T-cell (primary cell): ENCODE measurements at regions of chr3 and their contacts with region 1.

Region 1: GRCh38 chr3:4978204-4978965 is 852 bp upstream of the BHLHE40 start:
- DNase-seq: peak; percentile 39 to 85 (median 64)
- ATAC-seq: peak; percentile 51 to 55 (median 52)
- H3K4me3 ChIP-seq: peak overlapping the region; percentile 73 to 90
- H3K4me3 Mint-ChIP-seq: peak overlapping the region; percentile 94 to 98 (median 95)
- H3K27ac ChIP-seq: peak overlapping the region; percentile 94
- H3K27ac Mint-ChIP-seq: peak overlapping the region; percentile 98
- H3K4me1 ChIP-seq: peaks cover 18 to 49% of the 10 kb centered on the region in 2 experiments
- H3K4me1 Mint-ChIP-seq: peaks cover 49 to 60% (median 59%) of the 10 kb centered on the region in 3 donors
- H3K27me3 ChIP-seq: no peaks in the 10 kb centered on the region
- H3K27me3 Mint-ChIP-seq: no peaks in the 10 kb centered on the region

Region 2: GRCh38 chr3:4750306-4750968 is 227.9 kb before region 1 on chr3:
- CTCF ChIA-PET with region 1: interaction called in 1 of 2 experiments, 5 read pairs
- POLR2A ChIA-PET with region 1: interaction called in 1 of 2 experiments, 15 read pairs
- DNase-seq: peak in 8 of 35 experiments; percentile 10 to 47 (median 18)
- ATAC-seq: peak in 2 of 4 experiments; percentile 55 to 86
- H3K4me3 ChIP-seq: no peak overlapping the region
- H3K4me3 Mint-ChIP-seq: peak overlapping the region in 1 of 3 donors; percentile 38
- H3K27ac ChIP-seq: peak overlapping the region; percentile 53
- H3K27ac Mint-ChIP-seq: peak overlapping the region; percentile 71 to 83
- H3K4me1 ChIP-seq: peaks cover 0 to 17% of the 10 kb centered on the region in 2 experiments
- H3K4me1 Mint-ChIP-seq: peaks cover 34 to 39% (median 38%) of the 10 kb centered on the region in 3 donors
- H3K27me3 ChIP-seq: no peaks in the 10 kb centered on the region
- H3K27me3 Mint-ChIP-seq: no peaks in the 10 kb centered on the region

Region 3: DNA sequence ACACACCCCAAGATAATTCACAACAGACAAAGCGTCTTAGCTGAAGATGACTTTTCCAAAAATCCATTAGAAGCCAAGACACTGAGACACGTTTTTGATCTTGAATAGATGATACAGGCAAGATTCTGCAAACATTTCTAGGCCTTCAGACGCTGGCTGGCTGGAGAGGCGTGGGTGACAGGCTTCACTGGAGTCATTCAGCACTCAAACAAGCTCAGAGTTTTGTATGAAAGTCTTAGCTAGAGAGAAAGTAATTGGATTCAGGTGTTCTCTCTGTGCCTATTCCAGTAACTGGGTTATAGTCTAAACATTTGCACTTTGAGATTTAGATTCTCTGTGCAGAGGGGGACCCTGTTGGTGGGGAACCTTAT is 146.8 kb before region 1 on chr3:
- CTCF ChIA-PET with region 1: interaction called, 3 to 4 read pairs
- POLR2A ChIA-PET with region 1: interaction called, 3 to 13 read pairs
- DNase-seq: peak in 13 of 35 experiments; percentile 14 to 43 (median 26)
- ATAC-seq: peak; percentile 22 to 35 (median 30)
- H3K4me3 ChIP-seq: peak overlapping the region; percentile 20 to 36
- H3K4me3 Mint-ChIP-seq: peak overlapping the region; percentile 72 to 83 (median 82)
- H3K27ac ChIP-seq: peak overlapping the region; percentile 73
- H3K27ac Mint-ChIP-seq: peak overlapping the region; percentile 94 to 99
- H3K4me1 ChIP-seq: peaks cover 68 to 86% of the 10 kb centered on the region in 2 experiments
- H3K4me1 Mint-ChIP-seq: peaks cover 93 to 94% (median 93%) of the 10 kb centered on the region in 3 donors
- H3K27me3 ChIP-seq: no peaks in the 10 kb centered on the region
- H3K27me3 Mint-ChIP-seq: no peaks in the 10 kb centered on the region

Region 4: GRCh38 chr3:4943553-4943952 is 34.8 kb before region 1 on chr3:
- CTCF ChIA-PET with region 1: no interaction called
- POLR2A ChIA-PET with region 1: no interaction called
- DNase-seq: peak in 1 of 35 experiments; percentile 17
- ATAC-seq: no peak
- H3K4me3 ChIP-seq: no peak overlapping the region
- H3K4me3 Mint-ChIP-seq: no peak overlapping the region
- H3K27ac ChIP-seq: no peak overlapping the region
- H3K27ac Mint-ChIP-seq: no peak overlapping the region
- H3K4me1 ChIP-seq: no peaks in the 10 kb centered on the region
- H3K4me1 Mint-ChIP-seq: no peaks in the 10 kb centered on the region
- H3K27me3 ChIP-seq: no peaks in the 10 kb centered on the region
- H3K27me3 Mint-ChIP-seq: no peaks in the 10 kb centered on the region

Region 5: GRCh38 chr3:5035692-5036391 is 57.5 kb after region 1 on chr3:
- CTCF ChIA-PET with region 1: interaction called in 1 of 2 experiments, 15 read pairs
- POLR2A ChIA-PET with region 1: no interaction called
- DNase-seq: no peak
- ATAC-seq: no peak
- H3K4me3 ChIP-seq: no peak overlapping the region
- H3K4me3 Mint-ChIP-seq: no peak overlapping the region
- H3K27ac ChIP-seq: no peak overlapping the region
- H3K27ac Mint-ChIP-seq: no peak overlapping the region
- H3K4me1 ChIP-seq: peaks cover 0 to 11% of the 10 kb centered on the region in 2 experiments
- H3K4me1 Mint-ChIP-seq: peaks cover 0 to 14% (median 0%) of the 10 kb centered on the region in 3 donors
- H3K27me3 ChIP-seq: no peaks in the 10 kb centered on the region
- H3K27me3 Mint-ChIP-seq: no peaks in the 10 kb centered on the region

Region 6: DNA sequence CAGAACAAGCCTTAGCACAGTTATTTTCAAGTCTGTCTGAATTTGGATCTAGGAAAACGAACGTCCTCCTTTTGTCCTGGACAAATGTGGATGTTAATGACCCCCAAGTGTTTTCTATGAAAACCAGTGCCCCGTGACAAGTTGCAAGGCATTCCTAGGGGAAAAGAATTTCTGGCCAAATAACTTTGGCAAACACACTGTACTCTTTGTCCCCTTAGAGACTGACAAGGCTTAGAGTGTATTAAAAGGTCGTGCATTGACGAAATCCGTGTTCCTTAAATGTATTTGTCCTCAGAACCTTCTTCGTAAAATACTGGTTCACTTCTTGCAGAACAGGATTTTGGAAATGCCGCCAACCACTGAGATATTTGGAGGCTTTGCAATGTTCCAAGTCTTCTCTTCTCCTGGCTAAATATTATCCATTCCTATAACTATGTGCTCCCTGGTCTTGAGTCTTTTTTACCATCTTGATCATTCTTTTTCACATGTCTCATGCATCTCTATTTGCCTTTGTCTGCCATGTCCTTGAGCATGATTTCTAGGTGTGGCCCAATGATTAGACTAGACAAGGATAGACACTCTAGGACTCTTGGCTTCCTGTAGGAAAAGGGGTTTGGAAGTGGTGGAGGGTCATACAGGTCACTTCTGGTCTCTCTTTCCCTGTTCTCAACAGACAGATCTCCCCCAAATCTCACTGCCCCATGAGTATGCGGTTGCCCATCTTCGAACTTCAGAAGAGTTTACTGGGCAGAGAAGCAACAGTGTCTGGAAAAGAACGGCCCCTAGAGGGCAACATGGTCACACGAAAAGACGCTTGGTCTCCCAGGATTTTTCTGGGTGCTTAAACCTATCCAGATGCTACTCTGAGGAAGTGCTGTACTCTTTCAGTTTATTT is 326.7 kb after region 1 on chr3:
- CTCF ChIA-PET with region 1: no interaction called
- POLR2A ChIA-PET with region 1: no interaction called
- DNase-seq: peak in 11 of 35 experiments; percentile 1 to 25 (median 2)
- ATAC-seq: no peak
- H3K4me3 ChIP-seq: no peak overlapping the region
- H3K4me3 Mint-ChIP-seq: no peak overlapping the region
- H3K27ac ChIP-seq: no peak overlapping the region
- H3K27ac Mint-ChIP-seq: no peak overlapping the region
- H3K4me1 ChIP-seq: no peaks in the 10 kb centered on the region
- H3K4me1 Mint-ChIP-seq: no peaks in the 10 kb centered on the region
- H3K27me3 ChIP-seq: no peaks in the 10 kb centered on the region
- H3K27me3 Mint-ChIP-seq: peaks cover 5 to 9% of the 10 kb centered on the region in 2 donors